Head of caudate nucleus (tissue), 42 donors: ENCODE measurements at regions of chr14 and their contacts with region 1.

Region 1: GRCh38 chr14:35404449-35405303 is at the start of gene NFKBIA:
- DNase-seq: peak; percentile 81 to 97 (median 93)

Region 2: DNA sequence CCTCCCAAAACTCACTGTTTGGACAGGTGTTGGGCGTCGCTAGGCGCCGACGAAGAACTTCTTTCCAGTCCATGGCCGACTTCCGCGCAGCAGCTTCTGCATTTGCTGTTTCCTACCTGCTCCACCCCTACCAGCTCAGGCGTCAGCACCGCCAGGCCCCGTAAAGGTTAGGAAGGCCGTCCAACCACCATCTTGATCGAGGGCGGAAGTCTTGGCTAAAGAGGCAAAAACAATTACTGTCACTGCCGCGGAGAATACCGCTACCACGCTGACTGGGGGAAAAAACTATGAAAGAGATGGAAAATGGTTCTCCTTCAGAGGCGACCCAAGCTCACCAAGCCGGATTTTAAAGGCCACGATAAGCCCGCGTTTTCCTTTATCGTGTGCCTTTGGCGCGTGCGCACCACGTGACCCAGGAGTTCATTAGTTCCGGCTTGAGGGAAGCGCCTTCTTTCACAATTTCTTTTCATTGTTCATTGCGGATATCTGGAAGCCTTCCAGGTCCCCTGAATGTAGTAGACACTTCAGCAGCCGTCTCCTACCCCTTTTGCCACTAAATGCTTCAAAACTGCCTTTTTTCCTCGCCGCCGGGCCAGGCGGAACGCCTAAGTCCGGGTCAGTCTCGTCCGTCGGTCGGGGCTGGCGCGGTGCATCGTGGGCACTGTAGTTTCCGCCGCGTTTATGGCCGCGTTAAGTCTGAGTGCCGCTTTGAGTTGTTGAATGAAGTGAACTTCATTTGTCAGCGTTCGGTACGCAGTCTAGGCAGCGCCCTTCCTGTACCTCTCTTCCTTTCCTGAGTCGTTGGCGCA is 282.6 kb before region 1 on chr14 and contains the starts of genes PPP2R3C and PRORP:
- intact Hi-C with region 1: loop called (anchors 5 kb)
- DNase-seq: peak; percentile 87 to 97 (median 92)

Region 3: GRCh38 chr14:35229495-35230089 is 175.1 kb before region 1 on chr14:
- intact Hi-C with region 1: loop called (anchors 10 kb)
- DNase-seq: no peak

Region 4: GRCh38 chr14:35341446-35342159 is 63.1 kb before region 1 on chr14:
- intact Hi-C with region 1: loop called (anchors 2 kb)
- DNase-seq: peak; percentile 86 to 99 (median 96)